Endothelial cell of umbilical vein (primary cell): ENCODE measurements at regions of chr2 and their contacts with region 1.

Region 1: DNA sequence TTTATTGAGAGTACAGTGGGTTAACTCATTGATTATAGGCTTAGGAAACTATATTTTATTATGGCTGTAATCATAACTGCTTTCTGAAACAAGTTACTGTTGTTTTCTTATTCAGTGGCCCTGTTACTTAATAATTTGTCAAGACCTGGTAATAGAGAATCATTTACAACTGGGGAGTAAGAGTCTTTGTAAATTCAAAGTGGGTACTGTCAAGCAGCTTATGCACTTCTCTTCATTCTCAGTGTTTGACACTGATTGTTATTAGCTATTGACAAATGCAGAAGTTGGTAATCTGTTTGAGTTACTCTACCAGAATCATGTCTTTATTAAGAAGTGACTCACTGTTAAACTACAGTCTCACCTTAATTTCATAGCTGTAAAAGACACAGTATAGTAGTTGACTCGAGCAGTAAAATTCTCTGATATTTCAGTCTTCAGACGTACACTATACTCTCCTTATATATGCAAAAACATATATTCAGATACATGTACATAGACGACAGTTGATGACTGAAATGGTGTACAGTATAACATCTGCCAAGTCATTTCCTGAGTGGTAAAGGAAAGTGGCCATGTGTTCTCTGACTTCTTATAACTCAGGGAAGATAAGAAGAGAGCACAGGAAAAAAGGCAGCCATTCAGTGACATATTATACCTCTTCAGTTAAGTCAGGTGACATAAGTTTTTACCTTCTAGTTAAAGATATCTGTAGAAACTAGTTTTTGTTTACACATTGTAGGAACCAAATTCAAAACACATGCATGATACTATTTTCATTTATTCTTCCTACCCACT is 36.0 kb upstream of the TTC27 start:
- DNase-seq: peak; percentile 85
- H3K4me3 ChIP-seq: no peak overlapping the region
- H3K27ac ChIP-seq: peak overlapping the region; percentile 65
- H3K4me1 ChIP-seq: peaks cover 12% of the 10 kb centered on the region
- H3K27me3 ChIP-seq: no peaks in the 10 kb centered on the region
- CTCF ChIP-seq: no peak
- POLR2A ChIP-seq: no peak

Region 2: DNA sequence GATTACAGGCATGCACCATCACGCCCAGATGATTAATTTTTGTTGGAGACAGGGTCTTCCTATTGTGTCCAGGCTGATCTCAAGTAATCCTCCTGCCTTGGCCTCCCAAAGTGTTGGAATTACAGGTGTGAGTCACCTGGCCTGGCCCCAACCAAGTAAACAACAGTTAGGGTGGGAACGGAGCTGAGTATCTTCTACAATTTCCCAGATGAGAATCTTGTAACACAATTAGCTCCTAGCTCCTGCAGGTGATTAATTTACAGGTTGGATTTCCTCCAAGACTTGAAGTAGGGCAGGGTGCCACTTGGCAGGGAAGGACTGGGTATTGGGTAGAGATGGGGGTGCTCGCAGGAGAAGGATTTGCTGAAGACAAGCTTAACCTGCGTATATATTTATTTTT is 345.0 kb before region 1 on chr2:
- CTCF ChIA-PET with region 1: no interaction called
- POLR2A ChIA-PET with region 1: no interaction called
- dilution Hi-C with region 1: no loop called
- intact Hi-C with region 1: no loop called
- DNase-seq: no peak
- H3K4me3 ChIP-seq: no peak overlapping the region
- H3K27ac ChIP-seq: no peak overlapping the region
- H3K4me1 ChIP-seq: no peaks in the 10 kb centered on the region
- H3K27me3 ChIP-seq: no peaks in the 10 kb centered on the region
- CTCF ChIP-seq: no peak
- POLR2A ChIP-seq: no peak

Region 3: GRCh38 chr2:32572737-32573136 is 19.1 kb before region 1 on chr2:
- CTCF ChIA-PET with region 1: interaction called, 10 read pairs
- POLR2A ChIA-PET with region 1: no interaction called
- dilution Hi-C with region 1: no loop called
- intact Hi-C with region 1: no loop called
- DNase-seq: no peak
- H3K4me3 ChIP-seq: no peak overlapping the region
- H3K27ac ChIP-seq: no peak overlapping the region
- H3K4me1 ChIP-seq: no peaks in the 10 kb centered on the region
- H3K27me3 ChIP-seq: no peaks in the 10 kb centered on the region
- CTCF ChIP-seq: no peak
- POLR2A ChIP-seq: no peak